Mammary epithelial cell (primary cell): ENCODE measurements at regions of chr2 and their contacts with region 1.

Region 1: GRCh38 chr2:33033606-33034081 is 86.9 kb downstream of the LTBP1 start:
- DNase-seq: peak; percentile 42
- H3K4me3 ChIP-seq: peak overlapping the region in 2 of 3 experiments; percentile 8 to 30
- H3K27ac ChIP-seq: no peak overlapping the region
- H3K4me1 ChIP-seq: peaks cover 25% of the 10 kb centered on the region
- H3K27me3 ChIP-seq: no peaks in the 10 kb centered on the region
- CTCF ChIP-seq: peak; percentile 72 to 78

Region 2: GRCh38 chr2:32772638-32773447 is 260.8 kb before region 1 on chr2:
- CTCF ChIA-PET with region 1: no interaction called
- dilution Hi-C with region 1: no loop called
- in situ Hi-C with region 1: loop called (anchors 5 to 10 kb)
- intact Hi-C with region 1: loop called (anchors 1 kb)
- DNase-seq: peak; percentile 19
- H3K4me3 ChIP-seq: no peak overlapping the region
- H3K27ac ChIP-seq: no peak overlapping the region
- H3K4me1 ChIP-seq: no peaks in the 10 kb centered on the region
- H3K27me3 ChIP-seq: no peaks in the 10 kb centered on the region
- CTCF ChIP-seq: peak; percentile 36 to 66

Region 3: GRCh38 chr2:33051586-33052360 is 18.1 kb after region 1 on chr2:
- CTCF ChIA-PET with region 1: no interaction called
- dilution Hi-C with region 1: no loop called
- in situ Hi-C with region 1: no loop called
- intact Hi-C with region 1: no loop called
- DNase-seq: peak; percentile 27
- H3K4me3 ChIP-seq: no peak overlapping the region
- H3K27ac ChIP-seq: no peak overlapping the region
- H3K4me1 ChIP-seq: no peaks in the 10 kb centered on the region
- H3K27me3 ChIP-seq: no peaks in the 10 kb centered on the region
- CTCF ChIP-seq: no peak

Region 4: DNA sequence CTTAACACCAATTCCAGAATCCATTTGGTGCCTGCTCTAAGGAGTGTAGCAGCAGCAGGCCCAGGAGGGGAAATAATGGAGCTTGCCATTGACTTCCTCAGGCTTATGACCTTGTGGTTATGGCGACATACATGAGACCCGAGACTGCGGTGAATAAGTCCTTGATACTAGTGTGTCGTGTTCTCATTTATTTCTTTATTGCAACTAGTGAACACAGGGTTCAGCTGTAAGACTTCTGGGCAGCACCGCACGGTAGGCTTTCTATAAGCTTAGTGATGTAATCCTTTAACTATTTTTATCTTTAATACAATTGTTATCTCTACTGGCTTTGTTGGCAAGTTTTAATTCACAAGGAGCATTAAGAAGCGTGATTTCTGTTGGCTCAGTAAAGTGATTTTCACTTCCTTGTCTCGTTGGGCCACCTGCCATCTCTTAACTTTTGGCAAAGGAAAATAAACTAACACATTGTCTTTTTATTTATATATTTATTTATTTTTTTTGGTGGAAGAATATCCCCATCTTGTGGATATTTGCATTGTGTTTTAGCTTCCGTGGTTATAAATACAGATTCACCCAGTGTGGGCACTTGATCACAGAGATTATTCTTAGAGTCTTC is 52.9 kb after region 1 on chr2:
- CTCF ChIA-PET with region 1: interaction called, 7 read pairs
- dilution Hi-C with region 1: no loop called
- in situ Hi-C with region 1: no loop called
- intact Hi-C with region 1: loop called (anchors 1 kb)
- DNase-seq: no peak
- H3K4me3 ChIP-seq: no peak overlapping the region
- H3K27ac ChIP-seq: no peak overlapping the region
- H3K4me1 ChIP-seq: no peaks in the 10 kb centered on the region
- H3K27me3 ChIP-seq: no peaks in the 10 kb centered on the region
- CTCF ChIP-seq: no peak

Region 5: GRCh38 chr2:33104052-33104623 is 70.5 kb after region 1 on chr2:
- CTCF ChIA-PET with region 1: no interaction called
- dilution Hi-C with region 1: no loop called
- in situ Hi-C with region 1: no loop called
- intact Hi-C with region 1: no loop called
- DNase-seq: no peak
- H3K4me3 ChIP-seq: no peak overlapping the region
- H3K27ac ChIP-seq: peak overlapping the region; percentile 46
- H3K4me1 ChIP-seq: peaks cover 12% of the 10 kb centered on the region
- H3K27me3 ChIP-seq: no peaks in the 10 kb centered on the region
- CTCF ChIP-seq: no peak

Region 6: GRCh38 chr2:33275689-33276444 is 242.2 kb after region 1 on chr2:
- CTCF ChIA-PET with region 1: interaction called, 7 read pairs
- dilution Hi-C with region 1: no loop called
- in situ Hi-C with region 1: loop called in 1 of 2 experiments (anchors 5 kb)
- intact Hi-C with region 1: no loop called
- DNase-seq: peak; percentile 50
- H3K4me3 ChIP-seq: no peak overlapping the region
- H3K27ac ChIP-seq: no peak overlapping the region
- H3K4me1 ChIP-seq: no peaks in the 10 kb centered on the region
- H3K27me3 ChIP-seq: no peaks in the 10 kb centered on the region
- CTCF ChIP-seq: no peak

Region 7: DNA sequence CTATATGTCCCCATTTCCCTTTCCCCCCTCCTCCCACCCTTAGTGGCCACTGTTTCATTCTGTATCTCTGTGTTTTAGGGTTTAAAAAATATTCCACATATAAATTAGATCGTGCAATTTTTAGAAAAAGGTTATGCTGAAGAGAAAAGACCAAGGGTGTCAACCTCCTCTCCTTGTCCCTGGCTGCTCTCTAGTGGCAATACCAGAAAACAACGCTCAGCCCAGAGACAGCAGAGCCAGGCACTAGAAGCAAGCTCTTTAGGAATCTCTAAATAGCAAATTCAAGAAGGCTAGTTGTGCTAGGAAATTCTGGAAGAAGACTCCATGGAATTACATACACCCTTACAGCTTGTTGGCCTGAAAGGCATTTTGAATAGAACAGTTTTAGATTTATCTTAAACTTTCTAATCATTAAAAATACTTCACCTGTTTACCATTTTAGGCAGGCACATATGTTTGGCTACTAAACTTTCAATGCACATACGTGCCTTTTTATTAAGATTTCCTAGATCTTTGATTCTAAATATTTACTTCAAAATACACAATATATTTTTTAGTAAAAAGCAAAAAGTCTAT is 407.7 kb after region 1 on chr2:
- CTCF ChIA-PET with region 1: no interaction called
- dilution Hi-C with region 1: no loop called
- in situ Hi-C with region 1: no loop called
- intact Hi-C with region 1: loop called (anchors 1 kb)
- DNase-seq: peak; percentile 51
- H3K4me3 ChIP-seq: no peak overlapping the region
- H3K27ac ChIP-seq: no peak overlapping the region
- H3K4me1 ChIP-seq: peaks cover 6% of the 10 kb centered on the region
- H3K27me3 ChIP-seq: no peaks in the 10 kb centered on the region
- CTCF ChIP-seq: peak; percentile 76 to 82